ENCODE measurements at regions of chr5 and their contacts with region 1.

Region 1: DNA sequence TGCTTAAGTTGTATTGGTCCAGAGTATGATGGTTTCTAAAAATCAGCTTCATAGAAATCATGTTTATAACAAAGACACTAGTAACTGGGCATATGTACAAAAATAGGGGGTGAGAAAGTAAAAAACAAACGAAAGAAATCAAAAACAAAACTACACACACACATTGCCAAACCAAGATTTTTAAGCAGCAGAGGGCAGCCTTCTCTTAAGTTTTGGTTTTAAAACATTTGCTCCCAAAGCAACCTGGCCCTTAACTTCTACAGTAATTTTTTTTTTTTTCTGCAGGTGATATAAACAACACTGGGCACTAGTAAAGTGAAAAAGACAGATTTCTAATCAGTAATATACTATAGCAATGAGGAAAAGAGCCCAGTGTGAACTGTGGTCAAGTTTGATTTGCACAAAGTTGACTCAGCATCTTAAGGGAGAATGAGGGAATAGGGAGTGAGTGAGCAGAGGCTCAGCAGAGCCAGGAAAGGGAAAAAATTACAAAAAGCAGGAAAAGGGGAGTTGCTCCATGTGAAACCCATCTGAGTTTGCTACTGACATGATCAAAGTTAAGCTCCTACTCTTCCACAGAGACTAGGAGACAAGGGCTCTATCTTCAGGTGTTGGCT is 13.4 kb upstream of the GAPT start:
- DNase-seq: no peak
- H3K4me3 ChIP-seq: no peak overlapping the region
- H3K27ac ChIP-seq: no peak overlapping the region
- H3K4me1 ChIP-seq: no peaks in the 10 kb centered on the region
- H3K27me3 ChIP-seq: no peaks in the 10 kb centered on the region
- CTCF ChIP-seq: peak in 1 of 2 donors; percentile 31

Region 2: DNA sequence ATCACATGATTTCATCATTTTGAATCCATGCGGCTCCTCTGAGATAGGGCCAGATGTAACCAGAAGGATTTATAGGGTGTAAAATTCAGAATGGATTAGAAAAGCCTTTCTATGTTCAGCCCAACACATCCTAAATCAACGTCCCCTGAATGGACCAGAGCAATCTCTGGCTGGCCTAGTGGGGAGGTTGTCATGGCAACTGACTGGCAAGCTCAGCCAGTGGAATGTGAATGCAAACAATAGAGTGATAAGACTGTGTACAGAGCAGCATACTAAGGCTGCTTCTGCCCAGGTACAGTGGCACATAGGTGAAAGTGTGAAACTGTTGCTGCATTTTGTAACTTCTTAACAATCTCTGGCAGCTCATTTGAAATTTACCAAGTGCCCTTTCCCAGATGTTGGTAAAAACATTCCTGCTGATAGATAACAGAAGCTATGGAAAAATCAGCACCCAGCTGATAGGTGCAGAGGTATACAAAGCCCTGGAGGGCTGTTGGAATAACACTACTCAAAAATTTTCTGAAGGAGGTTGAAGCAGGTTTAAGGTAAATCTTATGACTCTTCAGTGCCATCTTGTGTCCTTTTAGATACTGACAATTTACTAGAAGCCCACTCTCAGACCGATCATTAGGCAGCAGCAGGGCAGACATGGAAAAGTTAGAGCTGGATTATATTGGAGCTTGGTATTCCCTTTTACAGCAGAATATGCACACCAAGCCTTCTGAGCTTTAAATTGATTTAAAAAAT is 372.2 kb after region 1 on chr5:
- CTCF ChIA-PET with region 1: no interaction called
- dilution Hi-C with region 1: no loop called
- in situ Hi-C with region 1: loop called in 1 of 2 experiments (anchors 25 kb)
- intact Hi-C with region 1: loop called (anchors 1 kb)
- DNase-seq: peak; percentile 9
- H3K4me3 ChIP-seq: no peak overlapping the region
- H3K27ac ChIP-seq: no peak overlapping the region
- H3K4me1 ChIP-seq: no peaks in the 10 kb centered on the region
- H3K27me3 ChIP-seq: peaks cover 4% of the 10 kb centered on the region
- CTCF ChIP-seq: peak; percentile 24 to 57